Adrenal gland (tissue), 19 donors: ENCODE measurements at regions of chr12 and their contacts with region 1.

Region 1: GRCh38 chr12:123580772-123581171 is 3.6 kb upstream of the TMED2 start:
- DNase-seq: no peak
- H3K4me3 ChIP-seq: no peak overlapping the region
- H3K27ac ChIP-seq: peak overlapping the region in 1 of 5 donors; percentile 8
- H3K4me1 ChIP-seq: peaks cover 0 to 21% of the 10 kb centered on the region in 2 donors
- H3K27me3 ChIP-seq: no peaks in the 10 kb centered on the region
- CTCF ChIP-seq: no peak
- POLR2A ChIP-seq: no peak

Region 2: GRCh38 chr12:123502163-123502704 is 78.5 kb before region 1 on chr12:
- intact Hi-C with region 1: no loop called
- DNase-seq: no peak
- H3K4me3 ChIP-seq: no peak overlapping the region
- H3K27ac ChIP-seq: no peak overlapping the region
- H3K4me1 ChIP-seq: no peaks in the 10 kb centered on the region
- H3K27me3 ChIP-seq: no peaks in the 10 kb centered on the region
- CTCF ChIP-seq: no peak
- POLR2A ChIP-seq: no peak

Region 3: GRCh38 chr12:123533672-123534643 is 46.8 kb before region 1 on chr12 and contains the start of gene RILPL1:
- intact Hi-C with region 1: loop called in 1 of 2 experiments (anchors 5 kb)
- DNase-seq: peak; percentile 50 to 77 (median 61)
- H3K4me3 ChIP-seq: peak within 1 kb of the TSS; percentile 7 to 98 (median 40)
- H3K27ac ChIP-seq: peak within 1 kb of the TSS in 4 of 5 donors; percentile 66 to 95 (median 75)
- H3K4me1 ChIP-seq: peaks cover 24 to 29% of the 10 kb centered on the region in 2 donors
- H3K27me3 ChIP-seq: no peaks in the 10 kb centered on the region
- CTCF ChIP-seq: peak in 5 of 6 experiments; percentile 15 to 42 (median 36)
- POLR2A ChIP-seq: peak in 1 of 2 donors; percentile 39
- total RNA-seq, gene RILPL1: 12.9 to 25.2 (median 20.1) TPM